CD4-positive, alpha-beta T cell (primary cell): ENCODE measurements at regions of chr11 and their contacts with region 1.

Region 1: GRCh38 chr11:73350908-73351636 is 25.1 kb upstream of the RELT start:
- DNase-seq: peak; percentile 36 to 87 (median 54)
- ATAC-seq: peak; percentile 94
- H3K4me3 ChIP-seq: no peak overlapping the region
- H3K4me3 Mint-ChIP-seq: no peak overlapping the region
- H3K27ac ChIP-seq: no peak overlapping the region
- H3K27ac Mint-ChIP-seq: no peak overlapping the region
- H3K4me1 ChIP-seq: peaks cover 3% of the 10 kb centered on the region
- H3K4me1 Mint-ChIP-seq: no peaks in the 10 kb centered on the region
- H3K27me3 ChIP-seq: no peaks in the 10 kb centered on the region
- H3K27me3 Mint-ChIP-seq: no peaks in the 10 kb centered on the region
- CTCF ChIP-seq: peak; percentile 98

Region 2: GRCh38 chr11:73307323-73308002 is 43.6 kb before region 1 on chr11:
- CTCF ChIA-PET with region 1: interaction called, 4 read pairs
- POLR2A ChIA-PET with region 1: no interaction called
- intact Hi-C with region 1: loop called in 1 of 2 experiments (anchors 1 kb)
- DNase-seq: peak; percentile 82 to 96 (median 86)
- ATAC-seq: peak; percentile 78
- H3K4me3 ChIP-seq: peak overlapping the region; percentile 70
- H3K4me3 Mint-ChIP-seq: peak overlapping the region; percentile 92
- H3K27ac ChIP-seq: no peak overlapping the region
- H3K27ac Mint-ChIP-seq: no peak overlapping the region
- H3K4me1 ChIP-seq: peaks cover 24% of the 10 kb centered on the region
- H3K4me1 Mint-ChIP-seq: peaks cover 10% of the 10 kb centered on the region
- H3K27me3 ChIP-seq: peaks cover 23% of the 10 kb centered on the region in 2 experiments
- H3K27me3 Mint-ChIP-seq: peaks cover 41% of the 10 kb centered on the region
- CTCF ChIP-seq: peak; percentile 65

Region 3: DNA sequence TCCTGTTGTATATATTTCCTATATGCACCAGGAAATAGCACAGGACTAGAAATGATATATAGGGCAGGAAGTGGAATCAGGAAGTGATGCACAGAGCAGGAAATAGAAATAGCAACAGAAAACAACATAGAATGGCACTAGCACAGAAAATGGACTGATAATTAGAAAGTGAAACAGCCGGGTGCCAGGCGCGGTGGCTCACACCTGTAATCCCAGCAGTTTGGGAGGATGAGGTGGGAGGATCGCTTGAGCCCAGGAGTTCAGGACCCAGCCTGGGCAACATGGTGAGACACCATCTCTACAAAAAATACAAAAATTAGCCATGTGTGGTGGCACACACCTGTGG is 15.2 kb after region 1 on chr11:
- CTCF ChIA-PET with region 1: interaction called, 33 read pairs
- POLR2A ChIA-PET with region 1: interaction called, 8 read pairs
- intact Hi-C with region 1: no loop called
- DNase-seq: peak in 6 of 14 experiments; percentile 12 to 86 (median 52)
- ATAC-seq: peak; percentile 93
- H3K4me3 ChIP-seq: peak overlapping the region; percentile 30
- H3K4me3 Mint-ChIP-seq: peak overlapping the region; percentile 40
- H3K27ac ChIP-seq: peak overlapping the region; percentile 48 to 92
- H3K27ac Mint-ChIP-seq: peak overlapping the region; percentile 88
- H3K4me1 ChIP-seq: peaks cover 37% of the 10 kb centered on the region
- H3K4me1 Mint-ChIP-seq: peaks cover 26% of the 10 kb centered on the region
- H3K27me3 ChIP-seq: no peaks in the 10 kb centered on the region
- H3K27me3 Mint-ChIP-seq: no peaks in the 10 kb centered on the region
- CTCF ChIP-seq: no peak

Region 4: DNA sequence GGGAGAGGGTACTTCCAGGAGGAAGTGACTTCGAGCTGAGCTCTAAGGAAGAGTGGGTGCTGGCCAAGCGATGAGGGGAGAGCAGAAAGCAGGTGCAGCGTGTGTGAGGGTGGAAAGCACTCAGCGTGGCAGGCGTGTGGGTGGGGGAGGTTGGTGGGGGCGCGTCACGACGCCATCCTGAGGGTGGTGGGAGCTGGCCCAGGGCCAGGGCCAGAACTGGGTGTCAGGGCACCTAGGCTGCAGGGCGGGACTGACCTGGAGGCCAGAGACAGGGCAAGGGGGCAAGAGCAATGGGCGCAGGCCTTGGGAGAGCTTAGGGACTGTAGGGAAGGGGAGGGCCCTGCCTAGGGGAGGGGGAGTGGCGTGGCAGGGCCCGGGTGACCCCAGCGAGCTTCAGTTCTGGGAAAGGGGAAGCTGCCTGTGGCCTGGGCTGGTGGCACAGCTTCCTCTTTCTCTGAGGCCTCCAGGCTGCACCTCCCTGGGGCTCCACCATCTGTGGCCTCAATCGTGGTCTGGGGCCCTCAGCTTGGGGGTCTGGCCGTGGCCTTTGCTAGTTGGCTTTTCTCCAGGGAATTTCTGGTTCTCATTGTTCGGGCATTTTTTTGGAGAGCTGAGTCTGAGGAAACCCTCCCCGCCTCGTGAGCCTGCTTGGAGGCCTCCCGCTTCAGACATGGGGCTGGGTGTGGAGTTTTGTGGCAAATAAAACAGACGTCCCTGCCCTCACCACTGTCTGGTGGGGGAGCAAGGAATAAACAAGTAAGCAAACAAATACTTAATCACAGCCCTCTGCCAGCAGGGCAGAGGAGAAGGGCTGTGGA is 34.0 kb after region 1 on chr11:
- CTCF ChIA-PET with region 1: interaction called, 11 read pairs
- POLR2A ChIA-PET with region 1: no interaction called
- intact Hi-C with region 1: no loop called
- DNase-seq: peak in 5 of 14 experiments; percentile 22 to 72 (median 51)
- ATAC-seq: peak; percentile 52
- H3K4me3 ChIP-seq: no peak overlapping the region
- H3K4me3 Mint-ChIP-seq: peak overlapping the region; percentile 63
- H3K27ac ChIP-seq: peak overlapping the region in 1 of 2 donors; percentile 45
- H3K27ac Mint-ChIP-seq: peak overlapping the region; percentile 80
- H3K4me1 ChIP-seq: peaks cover 94% of the 10 kb centered on the region
- H3K4me1 Mint-ChIP-seq: peaks cover 63% of the 10 kb centered on the region
- H3K27me3 ChIP-seq: no peaks in the 10 kb centered on the region
- H3K27me3 Mint-ChIP-seq: no peaks in the 10 kb centered on the region
- CTCF ChIP-seq: no peak

Region 5: DNA sequence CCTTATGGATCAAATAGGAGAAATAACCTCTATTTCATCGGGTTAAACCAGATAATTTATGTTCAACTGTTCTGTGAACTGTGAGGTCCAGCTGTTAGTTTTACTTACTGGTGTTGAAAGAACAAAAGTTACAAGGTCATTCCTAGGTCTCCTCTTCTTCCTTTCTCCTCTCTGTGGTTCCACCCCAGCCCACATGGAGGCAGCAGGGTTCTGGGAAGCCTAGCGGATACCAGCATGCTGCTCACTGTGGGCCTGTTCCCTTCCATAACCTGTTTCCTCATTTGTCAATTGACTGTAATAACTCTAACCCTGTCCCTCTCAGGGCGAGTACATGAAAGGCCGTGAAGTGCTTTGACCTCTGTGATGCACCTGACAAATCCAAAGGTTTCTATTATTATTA is 53.0 kb after region 1 on chr11:
- CTCF ChIA-PET with region 1: interaction called, 11 read pairs
- POLR2A ChIA-PET with region 1: no interaction called
- intact Hi-C with region 1: no loop called
- DNase-seq: peak in 2 of 14 experiments; percentile 46 to 48
- ATAC-seq: no peak
- H3K4me3 ChIP-seq: no peak overlapping the region
- H3K4me3 Mint-ChIP-seq: no peak overlapping the region
- H3K27ac ChIP-seq: no peak overlapping the region
- H3K27ac Mint-ChIP-seq: no peak overlapping the region
- H3K4me1 ChIP-seq: no peaks in the 10 kb centered on the region
- H3K4me1 Mint-ChIP-seq: no peaks in the 10 kb centered on the region
- H3K27me3 ChIP-seq: no peaks in the 10 kb centered on the region
- H3K27me3 Mint-ChIP-seq: no peaks in the 10 kb centered on the region
- CTCF ChIP-seq: no peak